HEK293 (cell line): ENCODE measurements at regions of chr6 and their contacts with region 1.

Region 1: GRCh38 chr6:37566111-37566949 is 66.6 kb upstream of the CCDC167 start:
- H3K4me3 ChIP-seq: no peak overlapping the region
- H3K27ac ChIP-seq: no peak overlapping the region
- H3K4me1 ChIP-seq: no peaks in the 10 kb centered on the region
- CTCF ChIP-seq: peak; percentile 90

Region 2: DNA sequence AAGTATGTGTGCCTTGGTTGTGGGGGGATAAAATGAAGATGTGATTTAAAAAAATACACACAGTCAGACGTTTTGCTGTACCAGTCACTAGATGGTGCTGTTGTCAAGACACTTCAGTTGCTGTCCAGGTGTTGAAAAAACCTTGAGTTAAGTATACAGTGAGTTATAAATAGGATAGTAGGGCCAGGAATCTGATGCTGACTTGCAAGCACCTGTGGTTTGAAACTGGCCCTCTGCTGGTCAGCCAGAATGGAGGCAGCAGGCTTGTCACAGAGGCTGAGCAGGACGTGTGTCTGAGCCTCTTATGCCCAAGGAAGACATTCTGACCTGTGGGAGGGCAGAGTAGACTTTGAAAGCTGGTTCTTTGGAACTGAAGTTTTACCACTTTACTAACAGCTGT is 184.8 kb before region 1 on chr6:
- CTCF ChIA-PET with region 1: no interaction called
- POLR2A ChIA-PET with region 1: no interaction called
- H3K4me3 ChIP-seq: no peak overlapping the region
- H3K27ac ChIP-seq: no peak overlapping the region
- H3K4me1 ChIP-seq: no peaks in the 10 kb centered on the region
- CTCF ChIP-seq: peak; percentile 40; the same call in 1 of the 2 replicates

Region 3: DNA sequence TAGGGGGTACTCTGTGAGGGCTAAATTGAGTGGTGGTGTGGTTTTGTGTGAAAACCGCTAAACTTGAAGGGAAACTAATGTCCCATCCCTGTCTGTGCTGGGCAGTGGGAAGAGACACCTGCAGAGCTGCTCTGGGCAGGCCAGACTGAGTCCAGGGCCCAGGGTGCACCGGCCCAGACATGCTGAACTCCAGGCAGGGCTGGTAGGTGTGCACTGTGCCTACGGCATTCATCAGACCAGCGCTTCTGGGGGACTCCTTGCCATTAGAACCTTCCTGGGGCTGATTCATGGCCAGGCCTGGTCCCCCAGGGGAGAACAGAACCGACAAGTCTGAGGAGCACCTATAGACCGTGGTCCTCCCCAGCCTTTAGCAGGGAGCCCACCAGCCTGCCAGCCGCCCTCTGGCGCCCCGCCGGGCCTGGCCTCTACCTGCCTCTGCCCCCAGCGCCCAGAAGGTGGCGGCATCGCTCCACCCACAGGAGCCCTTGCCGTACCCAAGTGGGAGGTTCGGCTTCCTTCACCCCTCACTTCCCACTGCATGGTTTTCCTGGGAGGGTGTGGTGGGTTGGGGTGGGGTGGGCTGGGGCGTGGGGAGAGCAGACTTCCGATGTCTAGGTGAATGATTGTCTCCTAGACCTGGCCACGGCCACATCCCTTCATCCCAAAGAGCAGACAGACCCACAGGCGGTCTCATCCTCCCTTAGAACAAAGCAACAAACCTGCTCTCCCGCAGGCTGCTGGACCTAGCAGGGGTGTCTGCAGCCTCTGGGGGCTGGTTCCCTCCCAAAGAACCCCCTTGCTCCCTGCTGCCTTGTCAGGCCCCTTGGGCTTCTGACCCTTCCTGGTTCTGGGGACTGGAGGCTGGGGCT is 82.2 kb before region 1 on chr6:
- CTCF ChIA-PET with region 1: interaction called, 19 read pairs
- POLR2A ChIA-PET with region 1: no interaction called
- H3K4me3 ChIP-seq: no peak overlapping the region
- H3K27ac ChIP-seq: no peak overlapping the region
- H3K4me1 ChIP-seq: no peaks in the 10 kb centered on the region; the same call in 1 of the 2 replicates
- CTCF ChIP-seq: peak; percentile 89

Region 4: DNA sequence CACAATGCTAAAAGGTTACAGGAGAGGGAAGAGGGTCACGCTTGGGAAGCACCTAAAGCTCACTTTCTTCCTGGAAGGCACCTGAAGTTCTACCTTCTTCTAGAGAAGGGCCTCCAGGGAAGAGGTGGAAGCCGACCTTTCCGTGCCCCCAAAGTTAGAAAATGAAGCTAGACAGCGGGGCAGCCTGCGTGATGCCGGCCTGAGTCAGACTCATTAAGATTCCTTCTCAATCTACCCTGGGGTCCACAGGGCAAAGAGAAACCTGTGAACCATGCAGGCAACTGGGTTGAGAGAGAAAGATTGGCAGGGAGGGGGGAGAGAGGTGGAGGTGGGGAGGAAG is 11.9 kb before region 1 on chr6:
- CTCF ChIA-PET with region 1: interaction called, 62 read pairs
- POLR2A ChIA-PET with region 1: no interaction called
- H3K4me3 ChIP-seq: no peak overlapping the region
- H3K27ac ChIP-seq: no peak overlapping the region
- H3K4me1 ChIP-seq: no peaks in the 10 kb centered on the region; the same call in 1 of the 2 replicates
- CTCF ChIP-seq: no peak

Region 5: DNA sequence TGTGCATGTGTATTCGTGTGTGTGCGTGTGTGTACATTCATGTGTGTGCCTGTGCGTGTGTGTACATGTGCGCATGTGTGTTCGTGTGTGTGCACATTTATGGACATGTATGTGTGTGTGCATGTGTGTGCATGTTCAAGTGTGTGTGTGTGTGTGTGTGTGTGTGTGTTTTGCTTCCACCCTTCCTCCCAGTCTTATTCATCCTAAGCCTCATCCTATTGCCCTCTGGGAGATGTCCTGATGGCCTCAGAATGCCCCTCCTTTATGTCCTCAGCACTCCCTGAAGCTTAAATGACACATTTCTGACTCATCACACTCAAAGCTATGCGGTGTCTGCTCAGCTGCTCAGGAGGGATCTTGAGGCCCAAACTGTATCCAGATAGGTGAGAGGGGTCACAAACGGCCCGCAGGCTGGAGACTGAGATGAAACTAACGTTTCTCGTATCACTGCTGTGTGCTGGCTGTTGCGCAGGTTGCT is 10.0 kb after region 1 on chr6:
- CTCF ChIA-PET with region 1: interaction called, 13 read pairs
- POLR2A ChIA-PET with region 1: interaction called, 3 read pairs
- H3K4me3 ChIP-seq: no peak overlapping the region
- H3K27ac ChIP-seq: no peak overlapping the region
- H3K4me1 ChIP-seq: no peaks in the 10 kb centered on the region
- CTCF ChIP-seq: no peak